ENCODE measurements at regions of chr13 and their contacts with region 1.

Region 1: GRCh38 chr13:36858290-36858689 is 39.3 kb downstream of the RFXAP start:
- DNase-seq: peak in 2 of 4 donors; percentile 39 to 44
- ATAC-seq: peak; percentile 82
- H3K4me3 ChIP-seq: no peak overlapping the region
- H3K27ac ChIP-seq: no peak overlapping the region
- H3K4me1 ChIP-seq: no peaks in the 10 kb centered on the region
- H3K27me3 ChIP-seq: no peaks in the 10 kb centered on the region
- CTCF ChIP-seq: peak; percentile 19 to 31

Region 2: DNA sequence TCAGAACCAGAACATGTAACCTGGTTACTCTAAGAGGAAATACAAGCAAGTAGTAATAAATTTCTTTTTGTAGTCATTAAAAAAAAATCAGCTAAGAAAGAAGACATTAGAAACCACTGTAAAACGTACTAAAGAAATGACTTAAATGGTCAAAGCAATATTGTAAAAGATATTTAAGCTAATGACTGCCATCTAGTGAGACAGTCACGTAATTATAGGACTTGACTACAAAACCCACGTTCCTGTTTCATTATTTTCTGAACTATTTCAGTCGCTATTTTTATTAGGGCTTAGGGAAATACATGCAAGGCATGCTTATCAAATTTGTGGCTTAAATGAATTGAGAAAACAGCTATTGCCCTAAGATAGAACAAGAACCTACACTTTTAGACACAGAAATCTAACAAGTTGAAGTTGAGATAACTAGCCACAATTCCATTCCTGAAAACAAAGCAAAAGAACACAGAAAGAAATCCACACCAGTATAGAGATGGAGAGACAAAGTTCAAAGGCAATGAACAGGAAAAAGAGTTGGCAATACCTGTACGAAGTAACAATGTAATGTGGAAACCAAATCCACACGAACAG is 123.0 kb after region 1 on chr13:
- intact Hi-C with region 1: loop called in 1 of 2 experiments (anchors 10 kb)
- DNase-seq: peak in 2 of 4 donors; percentile 47 to 62
- ATAC-seq: peak; percentile 61
- H3K4me3 ChIP-seq: no peak overlapping the region
- H3K27ac ChIP-seq: no peak overlapping the region
- H3K4me1 ChIP-seq: peaks cover 0 to 5% of the 10 kb centered on the region in 2 donors
- H3K27me3 ChIP-seq: no peaks in the 10 kb centered on the region
- CTCF ChIP-seq: peak in 1 of 2 donors; percentile 28

Region 3: GRCh38 chr13:37427843-37428494 is 569.7 kb after region 1 on chr13:
- intact Hi-C with region 1: no loop called
- DNase-seq: no peak
- ATAC-seq: no peak
- H3K4me3 ChIP-seq: no peak overlapping the region
- H3K27ac ChIP-seq: no peak overlapping the region
- H3K4me1 ChIP-seq: no peaks in the 10 kb centered on the region
- H3K27me3 ChIP-seq: no peaks in the 10 kb centered on the region
- CTCF ChIP-seq: no peak

Measured in left lung (tissue), 14 donors.